Activated T-helper 2 cell treated with anti-CD3 and anti-CD28 coated beads, Interferon-gamma antibody, Interleukin-2, Interleukin-4, amounts not matched to agents 10 μg/mL and 5 μg/mL and 100 μg/mL, durations not matched to agents 14 hours and 24 hours and 36 hours (primary cell): ENCODE measurements at regions of chr18 and their contacts with region 1.

Region 1: GRCh38 chr18:58043491-58044379 is at the start of gene NEDD4L:
- DNase-seq: peak; percentile 66
- H3K4me3 Mint-ChIP-seq: peak within 1 kb of the TSS; percentile 90
- H3K27ac Mint-ChIP-seq: peak within 1 kb of the TSS; percentile 58
- H3K4me1 Mint-ChIP-seq: peaks cover 28% of the 10 kb centered on the region
- H3K27me3 Mint-ChIP-seq: peaks cover 49% of the 10 kb centered on the region
- total RNA-seq, gene NEDD4L: 5.1 and 6.2 TPM in 2 replicates

Region 2: DNA sequence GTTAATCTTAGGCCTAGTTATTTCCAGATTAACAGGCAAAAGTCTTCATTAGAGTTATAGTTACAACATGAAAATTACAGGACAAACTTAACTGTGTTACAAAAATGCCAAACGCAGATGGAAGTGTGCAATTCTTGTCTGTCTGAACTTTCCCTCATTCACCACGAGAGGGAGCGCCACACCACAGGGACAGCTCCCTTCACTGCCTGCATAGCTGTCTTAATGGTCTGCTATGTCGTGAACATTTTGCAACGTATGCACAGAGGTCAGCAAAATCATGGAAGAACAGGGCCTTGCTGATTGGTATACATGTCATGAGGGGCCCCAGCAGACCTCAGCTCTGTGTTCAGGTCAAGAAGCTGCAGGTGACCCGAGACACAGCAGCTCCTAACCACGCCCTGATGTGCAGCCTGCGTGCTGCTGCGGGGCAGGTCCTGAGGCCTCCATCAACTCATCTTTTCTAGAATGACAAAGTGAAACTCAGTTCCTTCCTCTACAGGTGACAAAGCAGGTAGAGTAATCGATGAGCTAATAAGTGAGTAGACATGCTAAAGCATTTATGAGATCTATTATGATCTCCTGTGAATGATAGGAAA is 161.8 kb before region 1 on chr18:
- intact Hi-C with region 1: loop called (anchors 2 kb)
- DNase-seq: peak; percentile 10
- H3K4me3 Mint-ChIP-seq: no peak overlapping the region
- H3K27ac Mint-ChIP-seq: no peak overlapping the region
- H3K4me1 Mint-ChIP-seq: no peaks in the 10 kb centered on the region
- H3K27me3 Mint-ChIP-seq: peaks cover 2% of the 10 kb centered on the region

Region 3: DNA sequence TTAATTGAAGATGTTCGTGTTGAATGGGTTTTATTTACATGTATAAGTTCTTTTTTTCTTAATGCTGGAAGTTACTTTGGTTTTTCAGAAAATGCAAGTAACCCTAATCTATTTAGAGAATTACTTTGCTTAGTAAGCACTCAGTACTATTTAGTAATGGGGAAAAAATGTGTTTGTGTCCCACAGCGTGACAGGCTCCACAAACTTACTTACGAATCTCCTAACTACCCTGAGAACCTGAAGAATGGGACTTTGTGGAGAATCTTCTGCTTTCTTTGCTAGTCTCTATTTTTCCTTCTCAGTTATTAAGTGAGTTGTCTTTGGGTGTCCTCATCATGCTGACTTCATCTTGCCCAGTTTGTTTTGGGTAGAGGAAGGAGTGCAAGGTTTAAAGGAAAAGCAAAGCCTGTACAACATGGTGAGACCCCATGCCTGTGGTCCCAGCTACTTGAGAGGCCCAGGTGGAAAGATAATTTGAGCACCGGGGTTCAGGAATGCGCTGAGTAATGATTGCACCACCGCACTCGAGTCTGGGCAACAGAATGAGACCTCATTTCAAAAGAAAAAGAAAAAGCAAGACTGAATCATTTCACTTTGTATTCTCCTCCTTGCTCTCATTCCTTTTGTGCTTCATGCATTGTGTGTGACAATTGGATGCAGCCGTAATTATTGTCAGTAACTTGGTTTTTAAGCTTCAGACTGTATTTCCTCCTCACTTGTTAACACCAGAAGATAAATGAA is 10.5 kb after region 1 on chr18:
- intact Hi-C with region 1: no loop called
- DNase-seq: no peak
- H3K4me3 Mint-ChIP-seq: no peak overlapping the region
- H3K27ac Mint-ChIP-seq: no peak overlapping the region
- H3K4me1 Mint-ChIP-seq: no peaks in the 10 kb centered on the region
- H3K27me3 Mint-ChIP-seq: peaks cover 9% of the 10 kb centered on the region

Region 4: DNA sequence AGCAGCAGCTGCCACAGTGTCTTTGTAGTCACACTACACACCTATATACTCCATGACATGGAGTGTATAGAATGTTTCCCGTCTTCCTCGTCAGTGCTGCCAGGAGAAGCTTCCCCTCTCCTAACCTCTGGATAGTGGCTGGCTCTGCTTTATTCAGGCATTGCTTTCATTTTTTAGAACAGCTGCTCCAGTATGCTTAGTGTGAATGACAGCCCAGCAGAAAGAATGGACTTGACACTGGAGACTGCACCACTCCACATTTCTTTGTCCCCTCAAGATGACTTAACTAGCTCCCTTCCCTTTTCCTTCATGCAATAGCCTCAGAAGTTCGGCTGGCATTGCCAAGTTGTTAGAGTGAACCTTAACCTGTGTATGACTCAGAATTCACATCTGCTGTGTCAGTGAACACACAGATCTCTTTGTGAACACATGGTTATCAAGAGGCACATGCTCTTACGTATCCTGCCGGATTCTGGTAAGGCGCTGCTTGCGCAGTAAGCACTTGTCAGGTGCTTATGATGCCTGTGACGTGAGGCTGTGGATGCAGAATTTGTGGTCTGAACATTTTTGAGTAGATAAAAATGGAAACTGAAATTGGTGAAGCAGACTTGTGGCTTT is 74.2 kb after region 1 on chr18:
- intact Hi-C with region 1: loop called (anchors 1 kb)
- DNase-seq: no peak
- H3K4me3 Mint-ChIP-seq: no peak overlapping the region
- H3K27ac Mint-ChIP-seq: no peak overlapping the region
- H3K4me1 Mint-ChIP-seq: peaks cover 3% of the 10 kb centered on the region
- H3K27me3 Mint-ChIP-seq: peaks cover 3% of the 10 kb centered on the region

Region 5: DNA sequence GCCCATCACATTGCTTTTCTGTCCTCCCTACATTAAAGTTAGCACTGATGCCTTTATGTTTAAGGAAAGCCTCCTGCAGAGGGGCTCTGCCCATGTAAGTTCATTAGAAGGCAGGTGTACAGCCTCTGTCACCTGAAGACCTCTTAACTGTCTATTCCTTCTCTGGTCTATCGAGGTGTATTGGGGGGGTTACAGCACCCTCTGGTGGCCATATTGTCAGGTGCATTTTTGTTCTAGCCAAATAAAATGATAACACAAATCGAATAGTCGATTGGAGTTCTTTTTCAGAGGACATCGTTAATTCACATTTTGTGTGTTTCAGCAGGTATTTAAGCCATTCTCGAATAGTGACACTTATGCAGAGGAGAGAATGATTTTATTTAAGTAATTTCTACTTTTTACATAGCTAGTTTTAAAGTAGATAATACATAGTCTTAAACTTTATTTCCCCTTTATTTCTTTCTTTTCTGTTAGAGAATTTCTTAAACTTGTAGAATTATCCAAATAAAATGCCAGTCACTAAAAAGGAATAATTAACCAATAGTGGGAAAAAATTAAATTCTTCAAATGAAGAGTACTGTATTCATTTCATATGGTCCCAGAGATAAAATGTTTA is 137.1 kb after region 1 on chr18:
- intact Hi-C with region 1: loop called (anchors 5 kb)
- DNase-seq: peak; percentile 17
- H3K4me3 Mint-ChIP-seq: no peak overlapping the region
- H3K27ac Mint-ChIP-seq: no peak overlapping the region
- H3K4me1 Mint-ChIP-seq: no peaks in the 10 kb centered on the region
- H3K27me3 Mint-ChIP-seq: peaks cover 2% of the 10 kb centered on the region